ENCODE measurements at regions of chr6 and their contacts with region 1.

Region 1: GRCh38 chr6:161498359-161498758 is 224.5 kb upstream of the AGPAT4 start:
- DNase-seq: peak; percentile 40
- ATAC-seq: peak; percentile 79

Region 2: DNA sequence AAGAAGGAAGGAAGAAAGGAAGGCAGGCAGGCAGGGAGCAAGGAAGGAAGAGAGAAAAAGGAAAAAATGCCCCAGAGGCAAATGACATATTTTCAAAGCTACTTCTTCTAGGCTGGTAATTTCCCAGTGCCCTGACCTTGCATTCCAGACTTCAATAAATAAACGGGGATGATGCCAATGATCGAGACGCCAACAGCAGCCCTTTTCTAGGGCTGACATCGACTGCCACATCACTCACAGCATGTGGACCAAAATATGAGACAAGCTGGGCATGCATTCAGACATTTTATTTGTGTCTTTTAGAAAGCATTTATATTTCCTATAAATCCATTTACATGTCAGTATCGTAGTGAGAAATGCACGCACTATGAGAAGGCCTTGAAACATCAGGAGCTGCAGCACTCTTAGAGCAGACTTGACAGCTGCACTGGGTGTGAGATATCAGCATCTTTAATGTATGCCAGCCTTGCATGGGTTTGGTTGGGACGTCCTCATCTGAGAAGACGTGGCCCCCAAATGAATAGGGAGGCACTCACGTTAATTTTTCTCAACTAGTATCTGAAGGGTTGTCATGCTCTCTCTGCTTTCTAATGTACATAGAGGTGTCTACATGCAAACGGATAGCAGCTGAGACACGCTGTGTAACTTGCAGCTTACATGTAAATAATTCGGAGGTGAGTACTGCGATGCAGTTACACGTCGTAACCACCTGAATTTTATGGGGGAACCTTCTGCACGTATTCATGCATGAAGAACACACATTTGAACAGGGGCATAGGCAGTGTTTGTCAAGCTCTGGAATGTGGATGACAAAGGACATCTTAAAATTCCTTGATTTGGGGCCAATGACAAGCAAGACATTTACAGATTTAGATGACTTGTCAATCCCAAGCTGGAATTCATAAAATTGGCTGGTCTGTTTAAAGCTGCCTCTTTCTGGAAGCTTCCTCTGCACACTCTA is 75.4 kb before region 1 on chr6:
- intact Hi-C with region 1: loop called (anchors 5 kb)
- DNase-seq: no peak
- ATAC-seq: no peak

Region 3: GRCh38 chr6:161815965-161816364 is 317.6 kb after region 1 on chr6:
- intact Hi-C with region 1: no loop called
- DNase-seq: no peak
- ATAC-seq: no peak

Measured in left ventricle myocardium superior (tissue), 1 donor.